Right cardiac atrium (tissue), 5 donors: ENCODE measurements at regions of chr15 and their contacts with region 1.

Region 1: DNA sequence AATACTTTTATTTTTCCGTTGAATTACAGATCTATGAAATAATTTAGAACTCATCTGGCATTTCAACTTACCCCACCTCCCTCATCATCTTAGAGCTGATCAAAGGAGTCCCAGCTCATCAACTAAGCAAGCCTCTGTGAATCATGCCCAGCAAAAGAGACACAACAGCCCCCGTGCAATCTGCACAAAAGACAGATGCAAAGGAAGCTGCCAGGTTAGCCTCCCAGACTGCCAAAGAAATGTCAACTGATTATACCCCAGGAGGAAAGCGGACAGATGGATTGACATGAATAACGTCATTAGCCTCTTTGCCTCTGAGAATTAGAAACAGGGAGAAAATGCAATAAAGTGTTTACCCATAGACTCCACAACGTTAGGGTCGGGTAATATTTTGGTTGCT is 75.0 kb downstream of the GABRB3 start:
- DNase-seq: no peak
- ATAC-seq: no peak
- H3K4me3 ChIP-seq: no peak overlapping the region
- H3K27ac ChIP-seq: no peak overlapping the region
- H3K4me1 ChIP-seq: no peaks in the 10 kb centered on the region
- H3K27me3 ChIP-seq: no peaks in the 10 kb centered on the region

Region 2: GRCh38 chr15:26744894-26745293 is 47.0 kb after region 1 on chr15:
- intact Hi-C with region 1: loop called in 1 of 4 experiments (anchors 5 kb)
- DNase-seq: no peak
- ATAC-seq: no peak
- H3K4me3 ChIP-seq: no peak overlapping the region
- H3K27ac ChIP-seq: no peak overlapping the region
- H3K4me1 ChIP-seq: no peaks in the 10 kb centered on the region
- H3K27me3 ChIP-seq: no peaks in the 10 kb centered on the region

Region 3: DNA sequence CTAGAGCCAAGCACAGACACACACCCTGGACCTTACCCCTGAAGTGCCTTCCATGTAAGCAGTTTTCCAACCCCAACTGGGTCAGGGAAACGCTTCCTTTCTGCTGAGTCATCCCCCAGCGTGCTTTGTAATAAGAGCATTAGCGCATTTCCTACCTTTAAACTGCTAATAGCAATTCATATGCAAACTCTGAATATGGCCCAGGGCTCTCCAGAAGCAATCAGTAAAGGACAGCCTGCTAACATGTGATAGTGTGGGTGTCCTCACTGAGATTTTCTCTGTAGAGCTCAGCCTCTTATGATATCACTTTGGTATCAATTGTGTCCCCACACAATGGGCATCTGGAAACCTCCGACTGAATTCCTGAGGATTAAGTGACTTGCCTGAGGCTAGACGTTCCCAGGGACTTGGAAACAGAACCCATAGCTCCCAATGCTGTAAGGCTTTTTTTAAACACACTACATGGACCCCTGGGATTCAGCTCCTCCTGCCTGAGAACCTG is 69.3 kb after region 1 on chr15:
- intact Hi-C with region 1: loop called in 1 of 4 experiments (anchors 10 kb)
- DNase-seq: no peak
- ATAC-seq: no peak
- H3K4me3 ChIP-seq: no peak overlapping the region
- H3K27ac ChIP-seq: no peak overlapping the region
- H3K4me1 ChIP-seq: no peaks in the 10 kb centered on the region
- H3K27me3 ChIP-seq: peaks cover 3% of the 10 kb centered on the region